Naive thymus-derived CD4-positive, alpha-beta T cell (primary cell): ENCODE measurements at regions of chr7 and their contacts with region 1.

Region 1: GRCh38 chr7:130912862-130913631 is 179.0 kb upstream of the KLF14 start:
- DNase-seq: peak; percentile 49 to 91 (median 75)
- ATAC-seq: peak; percentile 90
- H3K4me3 ChIP-seq: peak overlapping the region; percentile 66
- H3K4me3 Mint-ChIP-seq: peak overlapping the region; percentile 80 to 100 (median 94)
- H3K27ac ChIP-seq: peak overlapping the region; percentile 88
- H3K27ac Mint-ChIP-seq: peak overlapping the region; percentile 86 to 98 (median 95)
- H3K4me1 ChIP-seq: peaks cover 46 to 73% of the 10 kb centered on the region in 2 donors
- H3K4me1 Mint-ChIP-seq: peaks cover 53 to 93% (median 89%) of the 10 kb centered on the region in 7 donors
- H3K27me3 ChIP-seq: no peaks in the 10 kb centered on the region
- H3K27me3 Mint-ChIP-seq: no peaks in the 10 kb centered on the region

Region 2: DNA sequence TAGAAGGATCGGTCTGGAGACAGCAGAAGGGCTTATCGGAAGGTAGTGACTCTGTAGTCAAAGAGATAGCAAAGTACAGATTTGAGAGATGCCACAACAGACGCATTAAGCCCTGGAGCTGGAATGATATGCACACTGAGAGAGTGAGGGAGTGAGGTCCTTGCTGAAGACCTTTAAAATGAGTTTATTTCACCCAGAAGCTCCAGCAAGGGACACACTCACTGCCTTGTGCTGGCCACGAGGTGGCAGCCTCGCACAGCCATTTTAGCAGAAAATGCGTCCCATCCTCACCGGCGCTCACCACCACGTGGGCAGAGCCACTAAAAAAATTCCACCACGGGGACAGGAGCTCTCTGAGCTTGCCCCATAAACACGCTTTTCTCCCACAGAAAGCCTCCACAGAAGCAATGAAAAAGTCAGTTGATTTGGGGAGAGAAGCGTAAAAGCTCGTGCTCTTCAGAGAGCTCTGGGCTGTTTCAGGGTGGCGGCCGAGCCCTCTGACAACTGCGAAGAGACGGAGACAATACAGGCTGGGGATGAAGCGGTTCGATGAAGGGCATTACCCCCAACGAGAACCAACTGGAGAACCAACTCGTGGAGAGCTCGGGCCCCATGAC is 16.0 kb before region 1 on chr7:
- CTCF ChIA-PET with region 1: interaction called, 9 read pairs
- POLR2A ChIA-PET with region 1: interaction called, 5 read pairs
- intact Hi-C with region 1: loop called (anchors 1 kb)
- DNase-seq: peak; percentile 60 to 76 (median 69)
- ATAC-seq: peak; percentile 84
- H3K4me3 ChIP-seq: no peak overlapping the region
- H3K4me3 Mint-ChIP-seq: peak overlapping the region in 7 of 10 donors; percentile 16 to 67 (median 37)
- H3K27ac ChIP-seq: no peak overlapping the region
- H3K27ac Mint-ChIP-seq: peak overlapping the region; percentile 61 to 92 (median 84)
- H3K4me1 ChIP-seq: peaks cover 16 to 35% of the 10 kb centered on the region in 2 donors
- H3K4me1 Mint-ChIP-seq: peaks cover 49 to 86% (median 83%) of the 10 kb centered on the region in 7 donors
- H3K27me3 ChIP-seq: no peaks in the 10 kb centered on the region
- H3K27me3 Mint-ChIP-seq: no peaks in the 10 kb centered on the region

Region 3: GRCh38 chr7:130941322-130942210 is 28.5 kb after region 1 on chr7:
- CTCF ChIA-PET with region 1: interaction called, 3 read pairs
- POLR2A ChIA-PET with region 1: interaction called, 3 read pairs
- intact Hi-C with region 1: loop called (anchors 1 kb)
- DNase-seq: peak in 1 of 9 donors; percentile 37
- ATAC-seq: peak; percentile 42
- H3K4me3 ChIP-seq: peak overlapping the region; percentile 41
- H3K4me3 Mint-ChIP-seq: peak overlapping the region; percentile 72 to 90 (median 84)
- H3K27ac ChIP-seq: peak overlapping the region; percentile 78
- H3K27ac Mint-ChIP-seq: peak overlapping the region in 8 of 9 donors; percentile 88 to 96 (median 94)
- H3K4me1 ChIP-seq: peaks cover 56 to 69% of the 10 kb centered on the region in 2 donors
- H3K4me1 Mint-ChIP-seq: peaks cover 68 to 97% (median 92%) of the 10 kb centered on the region in 7 donors
- H3K27me3 ChIP-seq: no peaks in the 10 kb centered on the region
- H3K27me3 Mint-ChIP-seq: no peaks in the 10 kb centered on the region

Region 4: DNA sequence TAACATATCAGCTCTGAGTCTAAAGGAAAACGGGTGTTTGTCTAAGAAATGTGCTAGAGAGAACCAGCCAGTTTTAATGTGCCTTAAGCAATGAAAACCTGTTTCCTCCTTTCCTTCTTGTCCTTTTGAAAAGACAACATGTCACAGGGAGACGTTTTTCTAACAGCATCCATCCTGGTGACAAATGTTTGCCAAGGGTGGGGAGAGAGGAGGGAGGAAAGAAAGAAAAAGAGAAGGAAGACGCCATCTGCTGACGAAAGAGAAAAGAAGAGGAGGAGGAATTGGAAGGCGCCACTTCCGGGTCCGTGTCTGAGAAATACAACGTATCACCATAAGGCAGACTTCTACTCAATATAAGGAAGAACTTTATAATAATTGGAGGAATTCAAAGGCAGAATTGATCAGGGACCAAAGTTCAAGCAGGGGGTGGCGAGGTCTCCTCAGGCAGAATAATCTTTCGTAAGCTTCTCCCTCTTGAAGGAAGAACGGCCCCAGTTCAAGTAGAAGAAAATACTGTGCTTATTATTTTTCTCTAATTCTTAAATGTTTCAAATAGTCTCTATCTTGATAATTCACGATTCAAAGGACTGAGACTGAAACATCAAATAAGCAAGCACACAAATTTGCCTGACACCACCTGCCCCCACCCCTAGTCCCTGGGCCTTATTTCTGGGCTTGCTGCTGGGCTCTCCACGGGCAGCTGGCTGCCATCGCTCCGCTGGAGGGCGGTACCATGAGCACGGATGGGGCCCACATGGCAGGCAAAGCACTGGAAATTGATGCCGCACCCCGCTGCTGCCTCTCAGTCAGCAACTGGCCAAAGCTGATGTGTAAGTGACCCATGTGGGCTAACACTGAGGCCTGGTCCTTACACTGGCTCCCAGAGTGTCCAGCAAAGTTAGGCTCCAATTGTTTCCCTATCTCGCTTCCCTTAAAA is 94.6 kb after region 1 on chr7:
- CTCF ChIA-PET with region 1: interaction called, 4 read pairs
- POLR2A ChIA-PET with region 1: interaction called, 3 read pairs
- intact Hi-C with region 1: loop called (anchors 1 kb)
- DNase-seq: peak in 7 of 9 donors; percentile 51 to 69 (median 63)
- ATAC-seq: peak; percentile 72
- H3K4me3 ChIP-seq: no peak overlapping the region
- H3K4me3 Mint-ChIP-seq: peak overlapping the region in 9 of 10 donors; percentile 52 to 87 (median 69)
- H3K27ac ChIP-seq: peak overlapping the region; percentile 67
- H3K27ac Mint-ChIP-seq: peak overlapping the region; percentile 83 to 97 (median 88)
- H3K4me1 ChIP-seq: peaks cover 60 to 64% of the 10 kb centered on the region in 2 donors
- H3K4me1 Mint-ChIP-seq: peaks cover 68 to 94% (median 87%) of the 10 kb centered on the region in 7 donors
- H3K27me3 ChIP-seq: no peaks in the 10 kb centered on the region
- H3K27me3 Mint-ChIP-seq: no peaks in the 10 kb centered on the region

Region 5: GRCh38 chr7:131040467-131040932 is 127.5 kb after region 1 on chr7:
- CTCF ChIA-PET with region 1: interaction called, 3 read pairs
- POLR2A ChIA-PET with region 1: no interaction called
- intact Hi-C with region 1: loop called in 1 of 2 experiments (anchors 5 kb)
- DNase-seq: peak in 7 of 9 donors; percentile 31 to 63 (median 56)
- ATAC-seq: peak; percentile 71
- H3K4me3 ChIP-seq: no peak overlapping the region
- H3K4me3 Mint-ChIP-seq: peak overlapping the region; percentile 16 to 84 (median 60)
- H3K27ac ChIP-seq: no peak overlapping the region
- H3K27ac Mint-ChIP-seq: peak overlapping the region; percentile 29 to 82 (median 54)
- H3K4me1 ChIP-seq: peaks cover 14 to 27% of the 10 kb centered on the region in 2 donors
- H3K4me1 Mint-ChIP-seq: peaks cover 44 to 78% (median 68%) of the 10 kb centered on the region in 7 donors
- H3K27me3 ChIP-seq: no peaks in the 10 kb centered on the region
- H3K27me3 Mint-ChIP-seq: no peaks in the 10 kb centered on the region

Region 6: DNA sequence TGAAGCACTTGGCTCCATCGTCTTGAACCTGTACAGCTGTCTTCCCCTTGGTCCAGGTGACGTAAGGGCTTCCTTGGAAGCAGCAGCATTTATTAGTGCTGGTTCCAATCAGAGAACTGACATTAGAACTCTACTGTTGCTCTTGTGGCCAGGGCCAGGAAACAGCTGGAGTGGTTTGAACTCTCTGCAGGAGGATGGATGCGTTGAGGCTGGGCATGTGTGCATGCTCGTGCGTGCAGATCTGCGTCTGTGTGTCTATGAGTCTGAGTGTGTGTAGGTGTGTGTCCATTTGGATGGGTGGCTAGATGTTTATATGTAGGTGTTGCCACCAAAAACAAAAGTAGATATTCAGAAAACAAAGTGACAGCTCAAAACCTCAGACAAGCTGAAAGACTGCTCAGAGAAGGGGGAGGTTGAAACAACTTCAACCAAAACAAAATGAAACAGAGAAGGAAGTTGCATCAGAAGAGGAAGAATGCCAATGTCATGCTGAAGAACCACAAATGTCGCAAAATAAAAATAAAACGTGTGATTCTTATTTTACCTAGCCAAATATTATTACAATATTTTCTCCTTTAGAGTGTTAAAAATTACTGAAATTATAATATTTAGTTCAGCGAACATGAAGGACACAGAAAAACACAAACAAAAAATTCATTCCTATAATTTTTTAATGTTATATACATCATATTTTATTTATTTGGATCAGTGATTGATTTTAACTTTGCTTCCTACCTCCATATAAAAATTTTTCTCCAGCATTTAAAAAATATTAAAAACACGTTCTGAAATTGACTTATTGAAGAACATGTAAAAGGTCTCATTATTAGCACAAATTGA is 318.6 kb after region 1 on chr7:
- CTCF ChIA-PET with region 1: no interaction called
- POLR2A ChIA-PET with region 1: no interaction called
- intact Hi-C with region 1: loop called in 1 of 2 experiments (anchors 5 kb)
- DNase-seq: peak; percentile 30 to 83 (median 74)
- ATAC-seq: peak; percentile 85
- H3K4me3 ChIP-seq: peak overlapping the region; percentile 33
- H3K4me3 Mint-ChIP-seq: peak overlapping the region; percentile 63 to 88 (median 82)
- H3K27ac ChIP-seq: peak overlapping the region; percentile 59
- H3K27ac Mint-ChIP-seq: peak overlapping the region; percentile 66 to 94 (median 91)
- H3K4me1 ChIP-seq: peaks cover 24 to 28% of the 10 kb centered on the region in 2 donors
- H3K4me1 Mint-ChIP-seq: peaks cover 21 to 67% (median 45%) of the 10 kb centered on the region in 7 donors
- H3K27me3 ChIP-seq: no peaks in the 10 kb centered on the region
- H3K27me3 Mint-ChIP-seq: no peaks in the 10 kb centered on the region

Region 7: GRCh38 chr7:131604841-131605279 is 691.8 kb after region 1 on chr7:
- CTCF ChIA-PET with region 1: no interaction called
- POLR2A ChIA-PET with region 1: no interaction called
- intact Hi-C with region 1: no loop called
- DNase-seq: no peak
- ATAC-seq: no peak
- H3K4me3 ChIP-seq: no peak overlapping the region
- H3K4me3 Mint-ChIP-seq: no peak overlapping the region
- H3K27ac ChIP-seq: no peak overlapping the region
- H3K27ac Mint-ChIP-seq: no peak overlapping the region
- H3K4me1 ChIP-seq: no peaks in the 10 kb centered on the region
- H3K4me1 Mint-ChIP-seq: no peaks in the 10 kb centered on the region
- H3K27me3 ChIP-seq: no peaks in the 10 kb centered on the region
- H3K27me3 Mint-ChIP-seq: peaks cover 20 to 33% (median 27%) of the 10 kb centered on the region in 5 donors